Activated CD4-positive, alpha-beta memory T cell treated with anti-CD3 and anti-CD28 coated beads for 36 hours (primary cell): ENCODE measurements at regions of chr5 and their contacts with region 1.

Region 1: DNA sequence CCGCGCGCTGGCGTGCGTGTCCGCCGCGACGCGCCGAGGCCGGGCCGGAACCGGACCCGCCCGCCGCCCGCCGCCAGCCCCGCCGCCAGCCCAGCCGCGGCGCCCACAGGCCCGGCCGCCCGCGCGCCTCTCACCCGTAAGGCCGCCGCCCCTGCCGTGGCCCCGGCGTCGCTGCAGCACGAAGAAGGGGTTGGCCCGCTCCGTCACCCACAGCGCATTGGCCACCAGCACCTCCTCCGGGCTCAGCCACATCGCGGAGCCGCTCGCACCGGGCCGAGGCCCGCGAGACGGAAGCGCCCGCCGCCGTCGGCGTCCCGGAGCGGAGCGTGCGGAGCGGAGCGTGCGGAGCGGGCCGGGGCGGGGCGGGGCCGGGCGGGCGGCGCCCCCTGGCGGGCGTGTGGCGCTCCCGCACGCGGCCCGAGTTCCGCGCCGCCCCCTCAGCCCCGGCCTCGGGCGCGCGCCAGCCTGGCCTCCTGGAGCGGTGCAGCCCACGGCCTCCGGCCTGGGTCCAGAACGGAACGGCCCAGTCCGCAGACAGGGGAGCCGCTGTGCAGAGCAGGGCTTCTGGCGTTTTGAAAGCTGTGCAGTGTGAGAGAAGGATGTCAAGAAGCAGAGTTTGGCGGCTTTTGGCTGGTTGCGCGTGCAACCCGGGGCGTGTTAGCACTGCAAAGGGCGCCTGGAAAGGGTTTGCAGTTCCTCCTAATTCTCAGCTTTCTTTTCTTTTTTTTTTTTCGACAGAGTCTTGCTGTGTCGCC is at the start of gene TBC1D9B:
- DNase-seq: peak; percentile 71
- H3K4me3 Mint-ChIP-seq: peak within 1 kb of the TSS; percentile 88
- H3K27ac Mint-ChIP-seq: peak within 1 kb of the TSS; percentile 69
- H3K4me1 Mint-ChIP-seq: peaks cover 14% of the 10 kb centered on the region
- H3K27me3 Mint-ChIP-seq: no peaks in the 10 kb centered on the region
- total RNA-seq, gene TBC1D9B: 59.0 to 62.8 TPM

Region 2: DNA sequence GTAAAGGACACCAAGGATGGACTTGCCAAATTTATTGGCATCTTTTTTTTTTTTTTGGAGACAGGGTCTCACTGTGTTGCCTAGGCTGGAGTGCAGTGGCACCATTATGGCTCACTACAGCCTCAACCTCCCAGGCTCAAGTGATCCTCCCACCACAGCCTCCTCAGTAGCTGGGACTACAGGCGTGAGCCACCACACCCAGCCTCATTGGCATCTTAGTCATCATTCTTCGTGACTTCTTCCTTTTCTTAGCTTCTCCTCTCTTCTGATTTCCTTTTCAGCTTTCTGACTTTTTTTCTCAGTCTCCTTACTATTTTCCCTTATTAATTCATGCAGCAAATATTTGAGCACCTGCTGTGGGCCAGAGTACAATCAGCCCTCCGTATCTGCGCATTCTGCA is 169.0 kb before region 1 on chr5:
- CTCF ChIA-PET with region 1: no interaction called
- POLR2A ChIA-PET with region 1: no interaction called
- intact Hi-C with region 1: no loop called
- DNase-seq: no peak
- H3K4me3 Mint-ChIP-seq: no peak overlapping the region
- H3K27ac Mint-ChIP-seq: no peak overlapping the region
- H3K4me1 Mint-ChIP-seq: peaks cover 57% of the 10 kb centered on the region
- H3K27me3 Mint-ChIP-seq: no peaks in the 10 kb centered on the region

Region 3: DNA sequence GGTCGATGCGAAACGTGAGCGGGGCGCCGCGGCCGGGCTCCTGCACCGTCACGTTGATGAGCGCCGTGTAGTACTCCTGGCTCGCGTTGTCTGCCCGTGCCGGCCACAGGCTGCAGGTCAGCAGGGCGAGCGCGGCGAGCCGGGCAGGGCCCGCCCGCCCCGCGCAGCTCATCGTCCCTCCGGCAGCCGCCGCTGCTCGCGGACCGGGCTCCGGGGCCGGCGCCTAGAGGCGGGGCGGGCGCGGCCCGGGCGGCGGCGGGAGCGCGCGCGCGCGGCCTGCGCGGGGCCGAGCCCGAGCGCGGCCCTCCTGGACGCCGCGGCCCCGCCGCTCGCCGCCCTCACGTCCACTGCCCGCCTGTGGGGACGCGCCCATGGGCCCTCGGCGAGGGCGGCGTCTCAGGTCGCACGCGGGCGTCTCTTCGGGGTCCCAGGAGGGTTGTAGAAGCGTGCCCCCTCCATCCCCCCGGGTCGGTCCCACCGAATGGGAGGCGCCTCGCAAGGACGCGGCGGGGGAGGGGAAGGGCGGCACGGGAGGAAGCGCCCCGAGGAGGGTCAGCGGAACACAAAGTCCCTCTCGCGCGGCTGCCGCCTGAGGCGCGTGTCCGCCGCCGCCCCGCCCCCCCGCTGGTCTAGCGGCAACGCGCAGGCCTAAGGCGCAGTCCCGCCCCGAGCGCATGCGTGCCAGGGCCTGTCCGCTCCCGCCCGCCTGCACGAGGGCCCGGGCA is 163.9 kb after region 1 on chr5 and contains the start of gene RNF130:
- CTCF ChIA-PET with region 1: interaction called, 3 read pairs
- POLR2A ChIA-PET with region 1: no interaction called
- intact Hi-C with region 1: loop called (anchors 10 kb)
- DNase-seq: peak; percentile 91
- H3K4me3 Mint-ChIP-seq: peak within 1 kb of the TSS; percentile 78
- H3K27ac Mint-ChIP-seq: peak within 1 kb of the TSS; percentile 63
- H3K4me1 Mint-ChIP-seq: peaks cover 29% of the 10 kb centered on the region
- H3K27me3 Mint-ChIP-seq: peaks cover 2% of the 10 kb centered on the region
- total RNA-seq, gene RNF130: 9.9 to 10.1 TPM